A673 (cell line): ENCODE measurements at regions of chr2 and their contacts with region 1.

Region 1: DNA sequence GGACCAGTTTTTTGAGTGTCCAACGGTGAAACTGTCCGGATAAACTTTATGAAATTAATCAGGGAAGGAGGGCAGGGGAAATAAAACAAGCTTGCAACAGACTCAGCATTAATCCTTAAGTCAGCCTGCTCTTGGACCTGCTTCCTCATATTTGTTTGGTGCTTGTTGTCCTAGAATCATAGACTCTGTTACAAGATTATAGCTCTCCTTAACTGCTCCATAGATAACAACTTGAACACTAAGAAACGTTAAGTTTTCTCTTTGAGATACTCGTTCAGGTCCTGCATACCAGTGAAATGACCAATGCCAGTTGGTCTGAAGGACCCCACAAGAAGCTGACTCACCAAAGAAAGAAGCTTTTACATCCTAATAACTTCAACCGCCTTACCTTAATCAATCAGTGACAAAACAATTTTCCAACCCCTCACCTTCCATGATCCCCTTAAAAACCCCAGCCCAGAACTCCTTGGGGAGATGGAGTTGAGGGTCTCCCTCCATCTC is 493.2 kb downstream of the PID1 start:
- DNase-seq: no peak
- H3K4me3 ChIP-seq: no peak overlapping the region
- H3K27ac ChIP-seq: no peak overlapping the region
- H3K4me1 ChIP-seq: no peaks in the 10 kb centered on the region
- H3K27me3 ChIP-seq: no peaks in the 10 kb centered on the region
- CTCF ChIP-seq: no peak

Region 2: DNA sequence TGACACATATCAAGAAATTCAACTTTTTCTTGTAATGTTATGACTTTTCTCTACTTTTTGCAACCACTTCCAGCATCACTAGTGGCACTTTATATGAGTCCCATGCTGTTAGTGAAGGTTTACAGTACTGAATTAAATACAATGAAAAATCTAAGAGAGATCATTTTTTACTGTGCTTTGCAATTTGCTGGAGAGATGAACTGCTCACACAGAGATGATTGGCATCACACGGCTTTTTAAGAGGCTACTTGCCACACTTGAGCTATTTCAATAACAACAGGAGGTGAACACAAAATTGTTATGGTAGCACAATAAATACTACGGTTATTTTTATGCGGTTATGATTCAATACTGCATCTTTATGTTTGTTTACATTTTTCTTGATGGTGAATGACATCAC is 817.6 kb before region 1 on chr2:
- CTCF ChIA-PET with region 1: no interaction called
- POLR2A ChIA-PET with region 1: no interaction called
- intact Hi-C with region 1: no loop called
- DNase-seq: no peak
- H3K4me3 ChIP-seq: no peak overlapping the region
- H3K27ac ChIP-seq: no peak overlapping the region
- H3K4me1 ChIP-seq: no peaks in the 10 kb centered on the region
- H3K27me3 ChIP-seq: no peaks in the 10 kb centered on the region
- CTCF ChIP-seq: no peak

Region 3: GRCh38 chr2:228793116-228793515 is 15.2 kb after region 1 on chr2:
- CTCF ChIA-PET with region 1: interaction called, 10 read pairs
- POLR2A ChIA-PET with region 1: no interaction called
- intact Hi-C with region 1: no loop called
- DNase-seq: no peak
- H3K4me3 ChIP-seq: no peak overlapping the region
- H3K27ac ChIP-seq: no peak overlapping the region
- H3K4me1 ChIP-seq: no peaks in the 10 kb centered on the region
- H3K27me3 ChIP-seq: no peaks in the 10 kb centered on the region
- CTCF ChIP-seq: no peak